Adrenal gland (tissue), 19 donors: ENCODE measurements at regions of chr15 and their contacts with region 1.

Region 1: GRCh38 chr15:23467110-23467600 is 20.1 kb upstream of the GOLGA6L2 start:
- DNase-seq: no peak
- H3K4me3 ChIP-seq: no peak overlapping the region
- H3K27ac ChIP-seq: no peak overlapping the region
- H3K4me1 ChIP-seq: no peaks in the 10 kb centered on the region
- H3K27me3 ChIP-seq: no peaks in the 10 kb centered on the region
- CTCF ChIP-seq: peak; percentile 32 to 72 (median 60)
- POLR2A ChIP-seq: no peak

Region 2: DNA sequence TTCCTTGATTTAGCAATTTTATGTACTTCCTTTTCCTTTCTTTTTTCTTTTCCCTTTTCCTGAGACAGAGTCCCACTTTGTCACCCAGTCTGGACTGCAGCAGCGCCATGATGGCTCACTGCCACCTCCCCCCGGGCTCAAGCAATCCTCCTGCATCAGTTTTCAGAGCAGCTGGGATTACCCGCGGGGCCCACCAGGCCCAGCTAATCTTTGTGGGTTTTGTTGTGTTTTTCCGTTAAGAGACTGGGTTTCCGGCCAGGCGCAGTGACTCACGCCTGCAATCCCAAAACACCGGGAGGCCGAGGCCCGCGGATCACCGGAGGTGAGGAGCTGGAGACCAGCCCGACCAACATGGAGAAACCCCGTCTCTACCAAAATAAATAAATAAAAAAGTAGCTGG is 94.9 kb before region 1 on chr15:
- intact Hi-C with region 1: loop called in 1 of 2 experiments (anchors 10 kb)
- DNase-seq: no peak
- H3K4me3 ChIP-seq: no peak overlapping the region
- H3K27ac ChIP-seq: no peak overlapping the region
- H3K4me1 ChIP-seq: no peaks in the 10 kb centered on the region
- H3K27me3 ChIP-seq: no peaks in the 10 kb centered on the region
- CTCF ChIP-seq: no peak
- POLR2A ChIP-seq: no peak

Region 3: DNA sequence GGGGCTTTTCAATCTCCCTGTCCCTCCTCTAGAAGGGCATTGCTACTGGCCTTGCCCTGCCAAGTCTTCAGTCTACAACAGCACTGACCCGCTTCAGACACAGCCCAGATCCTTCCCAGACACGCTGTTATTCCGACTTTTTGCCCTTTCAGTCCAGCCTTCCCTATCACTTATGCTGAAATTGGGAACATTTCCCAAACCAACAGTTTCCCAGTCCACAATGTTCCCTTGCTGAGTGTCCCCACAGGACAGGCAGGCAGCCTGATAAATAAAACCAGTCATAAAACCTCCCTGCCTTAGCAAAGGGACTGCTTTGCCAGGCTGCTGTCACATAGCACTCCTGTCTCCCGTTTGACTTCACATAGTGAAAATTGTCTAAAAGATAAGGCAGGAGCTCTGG is 63.6 kb before region 1 on chr15:
- intact Hi-C with region 1: loop called in 1 of 2 experiments (anchors 10 kb)
- DNase-seq: peak in 5 of 7 donors; percentile 35 to 75 (median 50)
- H3K4me3 ChIP-seq: no peak overlapping the region
- H3K27ac ChIP-seq: peak overlapping the region in 3 of 5 donors; percentile 2 to 22 (median 4)
- H3K4me1 ChIP-seq: no peaks in the 10 kb centered on the region
- H3K27me3 ChIP-seq: no peaks in the 10 kb centered on the region
- CTCF ChIP-seq: no peak
- POLR2A ChIP-seq: no peak

Region 4: DNA sequence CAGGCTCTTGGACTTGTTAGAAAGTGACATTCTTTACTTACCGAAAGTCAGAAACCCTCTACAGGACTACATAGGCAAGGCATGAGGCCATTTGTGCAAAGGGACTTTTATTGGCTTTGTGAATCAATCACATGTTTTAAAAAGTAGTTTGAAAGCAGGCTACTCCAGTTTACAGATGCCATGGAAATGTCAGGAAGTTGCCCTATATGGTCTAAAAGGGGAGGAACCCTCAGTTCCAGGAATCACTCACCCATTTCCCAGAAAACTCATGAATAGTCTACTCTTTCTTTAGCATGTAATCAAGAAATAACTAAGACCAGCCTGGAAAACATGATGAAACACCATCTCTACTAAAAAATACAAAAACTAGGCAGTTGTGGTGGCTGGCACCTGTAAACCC is 47.3 kb after region 1 on chr15:
- intact Hi-C with region 1: no loop called
- DNase-seq: no peak
- H3K4me3 ChIP-seq: no peak overlapping the region
- H3K27ac ChIP-seq: no peak overlapping the region
- H3K4me1 ChIP-seq: no peaks in the 10 kb centered on the region
- H3K27me3 ChIP-seq: no peaks in the 10 kb centered on the region
- CTCF ChIP-seq: no peak
- POLR2A ChIP-seq: no peak

Region 5: DNA sequence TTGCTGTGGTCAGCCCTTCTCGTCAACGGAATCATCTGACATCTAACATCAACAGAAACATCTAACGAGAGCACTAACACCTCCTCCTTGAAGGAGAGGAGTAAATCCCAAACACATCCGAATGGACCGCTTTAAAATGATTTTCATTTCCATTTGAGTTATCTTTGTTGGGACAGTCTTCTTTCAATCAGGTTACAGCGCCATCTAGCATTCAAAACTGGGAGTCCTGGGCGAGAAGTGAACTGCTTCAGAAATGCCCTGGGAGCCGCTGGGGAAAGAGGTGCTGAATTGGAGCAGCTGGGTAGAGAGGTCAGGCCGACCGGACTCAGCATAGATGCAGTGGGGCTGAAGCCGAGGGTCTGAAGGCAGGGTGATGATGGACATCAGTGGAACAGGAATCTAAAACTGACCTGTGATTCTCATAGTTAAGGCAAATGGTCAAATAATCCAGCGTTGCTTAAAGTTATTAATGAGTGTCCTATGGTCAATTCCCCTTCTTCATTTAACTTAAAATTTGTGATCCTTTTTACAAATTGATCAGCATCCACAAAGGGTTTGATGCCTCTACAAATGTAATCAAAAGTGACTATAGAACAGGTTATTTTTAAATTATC is 390.0 kb after region 1 on chr15:
- intact Hi-C with region 1: no loop called
- DNase-seq: peak; percentile 38 to 74 (median 58)
- H3K4me3 ChIP-seq: no peak overlapping the region
- H3K27ac ChIP-seq: no peak overlapping the region
- H3K4me1 ChIP-seq: no peaks in the 10 kb centered on the region
- H3K27me3 ChIP-seq: no peaks in the 10 kb centered on the region
- CTCF ChIP-seq: peak; percentile 23 to 49 (median 44)
- POLR2A ChIP-seq: no peak

Region 6: GRCh38 chr15:23983500-23984259 is 516.5 kb after region 1 on chr15:
- intact Hi-C with region 1: no loop called
- DNase-seq: no peak
- H3K4me3 ChIP-seq: no peak overlapping the region
- H3K27ac ChIP-seq: no peak overlapping the region
- H3K4me1 ChIP-seq: no peaks in the 10 kb centered on the region
- H3K27me3 ChIP-seq: no peaks in the 10 kb centered on the region
- CTCF ChIP-seq: no peak
- POLR2A ChIP-seq: no peak